Mucosa of descending colon (tissue), 3 donors: ENCODE measurements at regions of chr11 and their contacts with region 1.

Region 1: GRCh38 chr11:62048065-62048464 is 75.7 kb upstream of the INCENP start:
- DNase-seq: no peak
- ATAC-seq: no peak
- H3K4me3 ChIP-seq: no peak overlapping the region
- H3K4me1 ChIP-seq: peaks cover 21% of the 10 kb centered on the region
- CTCF ChIP-seq: no peak

Region 2: DNA sequence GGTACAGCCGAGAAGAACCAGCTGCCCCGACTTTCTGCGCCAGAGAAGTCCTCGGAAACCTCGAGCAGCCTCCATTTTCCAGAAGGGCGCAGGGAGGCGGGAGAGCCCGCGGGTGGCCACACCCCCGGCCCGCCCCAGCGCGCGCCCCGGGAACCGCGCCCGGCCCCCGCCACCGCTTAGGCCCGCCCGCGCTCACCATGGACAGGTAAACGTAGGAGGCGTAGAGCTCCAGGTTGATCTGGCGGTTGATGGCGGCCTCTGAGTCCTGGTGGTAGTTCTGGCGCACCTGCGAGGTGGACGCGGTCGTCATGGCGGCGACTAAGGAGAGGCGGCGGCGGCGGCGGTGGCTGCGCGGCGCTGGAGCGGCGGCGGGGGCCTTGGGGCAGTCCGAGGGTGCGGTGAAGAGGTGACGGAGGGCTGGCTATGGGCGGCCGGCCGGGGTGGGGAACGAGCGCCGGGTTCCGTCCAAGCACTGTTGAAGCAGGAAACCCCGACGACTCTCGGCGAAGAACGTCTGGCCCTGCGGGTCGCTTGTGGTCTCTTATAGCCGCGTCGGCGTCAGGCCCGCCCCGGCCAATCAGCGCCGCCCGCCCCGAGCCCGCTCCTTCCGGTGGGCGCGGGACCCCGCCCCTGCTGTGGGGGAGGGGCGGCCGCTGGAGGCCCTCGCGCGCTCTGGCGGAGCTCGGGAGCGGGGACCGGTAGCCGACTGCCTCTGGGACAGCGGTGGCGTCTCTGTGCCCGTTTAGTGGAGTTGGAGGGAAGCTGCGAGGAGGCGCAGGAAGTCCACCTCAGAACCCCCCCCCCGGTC is 80.7 kb before region 1 on chr11 and contains the start of gene FTH1:
- intact Hi-C with region 1: loop called in 1 of 2 experiments (anchors 5 kb)
- DNase-seq: peak; percentile 95 to 96 (median 96)
- ATAC-seq: peak; percentile 83
- H3K4me3 ChIP-seq: peak within 1 kb of the TSS; percentile 75
- H3K4me1 ChIP-seq: peaks cover 44% of the 10 kb centered on the region
- CTCF ChIP-seq: no peak
- total RNA-seq, gene FTH1: 3,081 to 6,795 (median 5,370) TPM

Region 3: GRCh38 chr11:62147545-62147944 is 99.5 kb after region 1 on chr11:
- intact Hi-C with region 1: no loop called
- DNase-seq: no peak
- ATAC-seq: no peak
- H3K4me3 ChIP-seq: no peak overlapping the region
- H3K4me1 ChIP-seq: no peaks in the 10 kb centered on the region
- CTCF ChIP-seq: no peak